Colonic mucosa (tissue), 4 donors: ENCODE measurements at regions of chr14 and their contacts with region 1.

Region 1: DNA sequence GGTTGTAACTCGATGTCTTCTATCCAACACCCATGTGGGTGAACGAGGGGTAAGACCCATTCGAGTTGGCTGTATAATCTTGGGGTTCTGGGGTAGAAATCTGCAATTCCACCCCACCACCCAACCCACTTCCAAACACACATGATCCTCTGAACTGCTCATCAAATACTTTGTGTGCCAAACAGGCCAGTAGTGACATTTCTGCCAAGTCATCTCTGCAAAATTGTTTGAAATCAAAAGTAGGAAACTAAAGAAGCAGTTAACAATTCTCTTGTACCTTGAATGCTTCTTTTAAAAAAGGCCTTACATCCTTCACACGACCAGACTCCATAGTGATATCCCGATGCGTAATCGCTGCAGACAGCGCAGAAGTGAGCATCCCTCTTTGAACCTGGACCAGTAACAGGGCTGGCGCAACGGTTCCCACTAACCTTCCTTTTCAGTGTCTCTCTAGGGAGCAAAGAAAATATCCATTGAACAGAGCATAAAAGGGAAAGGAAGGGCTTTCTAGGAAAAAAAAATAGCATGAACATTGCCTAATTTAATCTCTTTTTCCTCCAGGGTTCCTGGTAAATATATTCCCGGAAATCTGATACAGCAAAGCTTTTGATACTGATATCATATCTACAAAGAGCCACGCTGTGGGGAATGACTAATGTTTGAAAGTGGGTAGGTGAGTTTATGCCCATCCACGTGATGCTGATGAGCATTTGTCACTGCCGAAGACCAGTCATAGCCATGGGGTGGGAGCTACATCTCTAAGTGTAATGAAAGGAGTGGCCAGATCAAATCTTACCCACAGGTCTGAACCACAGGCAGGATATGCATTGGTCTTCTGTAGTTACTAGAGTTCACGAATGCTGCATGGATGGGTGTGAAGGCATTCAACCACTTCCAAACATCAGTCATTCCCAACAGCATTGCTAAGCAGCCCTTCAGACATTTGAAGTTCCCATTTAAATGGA is 14.2 kb downstream of the ESR2 start:
- DNase-seq: no peak
- H3K4me3 ChIP-seq: no peak overlapping the region
- H3K27ac ChIP-seq: no peak overlapping the region
- H3K4me1 ChIP-seq: no peaks in the 10 kb centered on the region
- H3K27me3 ChIP-seq: no peaks in the 10 kb centered on the region
- CTCF ChIP-seq: no peak

Region 2: GRCh38 chr14:64232095-64232838 is 47.7 kb before region 1 on chr14:
- intact Hi-C with region 1: loop called (anchors 5 kb)
- DNase-seq: no peak
- H3K4me3 ChIP-seq: no peak overlapping the region
- H3K27ac ChIP-seq: no peak overlapping the region
- H3K4me1 ChIP-seq: no peaks in the 10 kb centered on the region
- H3K27me3 ChIP-seq: no peaks in the 10 kb centered on the region
- CTCF ChIP-seq: no peak

Region 3: DNA sequence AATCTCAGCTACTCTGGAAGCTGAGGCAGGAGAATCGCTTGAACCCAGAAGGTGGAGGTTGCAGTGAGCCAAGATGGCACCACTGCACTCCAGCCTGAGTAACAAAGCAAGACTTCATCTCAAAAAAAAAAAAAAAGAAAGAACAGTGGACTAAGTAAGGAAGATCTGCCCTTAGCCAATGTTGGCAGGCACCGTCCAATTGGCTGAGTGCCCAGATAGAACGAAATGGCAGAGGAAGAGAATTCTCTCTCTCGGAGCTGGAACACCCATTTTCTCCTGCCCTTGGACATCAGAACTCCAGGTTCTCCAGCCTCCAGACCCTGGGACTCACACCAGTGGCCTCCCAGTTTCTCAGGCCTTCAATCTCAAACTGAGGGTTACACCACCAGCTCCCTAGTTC is 35.7 kb before region 1 on chr14:
- intact Hi-C with region 1: no loop called
- DNase-seq: no peak
- H3K4me3 ChIP-seq: no peak overlapping the region
- H3K27ac ChIP-seq: no peak overlapping the region
- H3K4me1 ChIP-seq: no peaks in the 10 kb centered on the region
- H3K27me3 ChIP-seq: no peaks in the 10 kb centered on the region
- CTCF ChIP-seq: no peak